A549 (cell line): ENCODE measurements at regions of chr1 and their contacts with region 1.

Region 1: DNA sequence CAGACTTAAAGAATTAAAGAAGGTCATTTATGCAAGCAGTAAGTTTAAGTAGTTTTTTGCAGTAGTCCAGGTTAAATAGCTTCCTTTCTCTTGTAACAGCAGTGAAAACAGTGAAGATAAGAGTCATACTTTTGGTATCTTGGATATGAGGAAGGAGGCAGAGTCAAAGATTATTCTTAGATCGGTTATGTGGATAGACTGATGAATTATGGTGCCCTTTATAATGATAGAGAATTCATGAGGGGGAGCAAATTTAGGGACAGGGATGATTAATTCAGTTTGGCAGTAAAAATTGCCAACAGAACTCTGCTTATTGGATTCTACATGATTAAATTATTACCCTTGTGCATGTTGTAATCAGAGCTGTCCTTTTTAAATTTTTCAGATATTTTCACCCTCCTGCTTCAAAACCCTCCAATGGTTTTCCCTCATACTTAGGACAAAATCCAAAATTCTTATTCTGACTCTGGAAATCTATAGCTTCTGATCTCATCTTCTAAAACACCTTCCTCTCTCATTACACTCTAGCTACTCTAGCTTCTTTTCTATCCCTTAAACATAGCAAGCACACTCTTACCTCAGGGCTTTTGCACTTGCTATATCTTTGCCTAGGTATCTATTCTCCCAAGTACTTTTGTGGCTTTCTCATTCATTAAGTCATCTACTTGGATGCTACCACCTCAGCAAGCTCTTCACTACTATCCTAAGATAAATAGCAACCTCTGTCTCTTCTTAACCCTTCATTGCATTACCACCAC is 79.8 kb downstream of the PKN2 start:
- DNase-seq: no peak
- ATAC-seq: peak in 1 of 2 experiments; percentile 61; a peak in 3 of 6 replicates
- H3K4me3 ChIP-seq: no peak overlapping the region
- H3K27ac ChIP-seq: 0 out of 6 replicates have a peak overlapping the region, but pooled peaks of 1 of the 2 experiments have one; percentile 20
- H3K4me1 ChIP-seq: peaks cover 13% of the 10 kb centered on the region
- CTCF ChIP-seq: no peak
- EP300 ChIP-seq: no peak
- POLR2A ChIP-seq: no peak
- RAD21 ChIP-seq: no peak

Region 2: GRCh38 chr1:88726697-88727096 is 37.1 kb before region 1 on chr1:
- CTCF ChIA-PET with region 1: no interaction called
- POLR2A ChIA-PET with region 1: interaction called, 12 read pairs
- DNase-seq: no peak
- ATAC-seq: no peak
- H3K4me3 ChIP-seq: no peak overlapping the region
- H3K27ac ChIP-seq: no peak overlapping the region
- H3K4me1 ChIP-seq: peaks cover 10% of the 10 kb centered on the region
- CTCF ChIP-seq: no peak
- EP300 ChIP-seq: no peak
- POLR2A ChIP-seq: no peak
- RAD21 ChIP-seq: no peak